MCF 10A (cell line): ENCODE measurements at regions of chr13 and their contacts with region 1.

Region 1: GRCh38 chr13:112873851-112874750 is 94.9 kb upstream of the MCF2L start:
- DNase-seq: peak; percentile 70
- H3K4me3 Mint-ChIP-seq: no peak overlapping the region
- H3K27ac Mint-ChIP-seq: no peak overlapping the region
- H3K4me1 Mint-ChIP-seq: peaks cover 10% of the 10 kb centered on the region
- H3K27me3 Mint-ChIP-seq: no peaks in the 10 kb centered on the region
- CTCF ChIP-seq: peak; percentile 88

Region 2: DNA sequence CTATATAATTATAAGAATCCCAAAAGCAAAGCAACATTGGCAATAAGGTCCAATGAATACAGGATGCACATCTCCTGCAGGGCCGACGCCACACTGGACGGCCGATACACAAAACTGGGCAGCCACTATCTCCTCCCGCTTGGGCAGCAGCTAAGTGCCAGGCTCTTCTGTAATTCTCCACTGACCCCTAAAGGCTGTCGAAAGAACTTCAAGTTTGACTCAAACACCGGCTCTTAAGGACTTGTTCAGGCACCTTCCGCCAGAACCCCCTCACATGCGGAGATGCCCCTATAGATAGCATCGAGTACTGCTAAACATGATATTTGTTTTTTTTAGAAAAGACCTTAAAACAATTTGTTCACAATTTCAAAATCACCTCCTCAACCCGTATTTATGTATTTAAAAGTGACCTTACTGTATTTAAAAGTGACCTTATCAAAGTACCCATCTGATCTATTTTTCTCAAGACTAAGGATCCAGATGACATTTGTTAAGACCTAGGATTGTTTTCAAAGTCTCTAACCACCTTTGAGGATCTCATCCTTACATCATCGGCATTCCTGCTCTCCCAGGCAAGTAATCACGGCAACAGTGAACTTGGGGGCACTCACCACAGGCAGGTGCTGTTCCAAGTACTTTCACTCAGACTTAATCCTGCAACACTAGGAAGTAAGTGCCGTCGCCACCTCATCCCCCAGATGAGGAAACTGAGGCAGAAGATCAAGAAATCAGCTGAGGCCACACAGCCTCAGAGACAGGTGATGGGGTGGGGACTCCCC is 363.9 kb before region 1 on chr13:
- CTCF ChIA-PET with region 1: no interaction called
- POLR2A ChIA-PET with region 1: no interaction called
- intact Hi-C with region 1: loop called (anchors 5 kb)
- DNase-seq: peak; percentile 53
- H3K4me3 Mint-ChIP-seq: no peak overlapping the region
- H3K27ac Mint-ChIP-seq: peak overlapping the region; percentile 25
- H3K4me1 Mint-ChIP-seq: no peaks in the 10 kb centered on the region
- H3K27me3 Mint-ChIP-seq: no peaks in the 10 kb centered on the region
- CTCF ChIP-seq: peak; percentile 52

Region 3: GRCh38 chr13:112616586-112617362 is 257.3 kb before region 1 on chr13:
- CTCF ChIA-PET with region 1: interaction called, 3 read pairs
- POLR2A ChIA-PET with region 1: no interaction called
- intact Hi-C with region 1: loop called (anchors 1 kb)
- DNase-seq: peak; percentile 62
- H3K4me3 Mint-ChIP-seq: no peak overlapping the region
- H3K27ac Mint-ChIP-seq: no peak overlapping the region
- H3K4me1 Mint-ChIP-seq: no peaks in the 10 kb centered on the region
- H3K27me3 Mint-ChIP-seq: peaks cover 33% of the 10 kb centered on the region
- CTCF ChIP-seq: peak; percentile 38

Region 4: DNA sequence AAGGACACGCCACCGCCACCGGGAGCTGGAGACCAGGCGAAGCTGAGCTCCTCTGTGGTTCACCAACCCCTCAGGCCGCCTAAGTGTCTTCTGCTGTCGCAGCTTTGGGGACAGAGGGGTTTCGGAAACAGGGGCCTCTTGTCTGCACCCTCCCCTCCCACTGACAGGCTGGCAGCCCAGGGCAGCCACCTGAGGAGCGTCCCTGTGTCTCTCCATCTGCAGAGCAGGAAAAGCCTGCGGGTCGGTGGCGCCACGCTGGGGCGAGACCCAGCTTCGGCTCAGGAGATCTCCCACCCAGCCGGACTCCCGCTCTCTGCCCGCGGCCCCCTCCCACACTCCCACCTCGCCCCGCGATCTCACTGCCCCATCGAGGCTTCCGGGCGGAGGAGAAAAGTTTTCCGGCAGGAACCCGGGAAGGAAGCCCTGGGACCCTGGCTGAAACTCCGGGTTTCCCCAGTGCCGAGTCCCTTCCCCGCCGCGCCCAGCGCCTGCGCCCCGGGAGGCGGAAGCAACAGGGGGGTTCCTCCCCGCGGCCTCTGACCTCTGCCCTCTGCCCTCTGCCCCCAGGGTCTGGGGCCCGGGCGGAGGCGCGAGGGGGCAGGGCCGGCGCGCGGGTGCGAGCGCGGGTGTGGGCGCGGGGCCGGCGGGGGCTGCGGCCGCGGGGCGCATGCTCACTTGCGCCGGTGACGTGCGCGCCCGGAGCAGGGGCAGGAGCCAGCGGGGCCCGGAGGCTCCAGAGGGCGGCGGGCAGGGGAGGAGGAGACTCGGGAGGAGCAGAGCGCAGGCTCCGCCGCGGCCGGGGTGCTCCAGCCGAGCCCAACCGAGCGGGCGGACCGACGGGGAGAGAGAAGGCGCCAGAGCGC is 184.6 kb before region 1 on chr13 and contains the start of gene ATP11A:
- CTCF ChIA-PET with region 1: no interaction called
- POLR2A ChIA-PET with region 1: no interaction called
- intact Hi-C with region 1: loop called (anchors 2 kb)
- DNase-seq: peak; percentile 85
- H3K4me3 Mint-ChIP-seq: peak within 1 kb of the TSS; percentile 85
- H3K27ac Mint-ChIP-seq: peak within 1 kb of the TSS; percentile 84
- H3K4me1 Mint-ChIP-seq: peaks cover 27% of the 10 kb centered on the region
- H3K27me3 Mint-ChIP-seq: no peaks in the 10 kb centered on the region
- CTCF ChIP-seq: no peak
- total RNA-seq, gene ATP11A: 41.2 and 42.7 TPM in 2 replicates

Region 5: GRCh38 chr13:112711528-112712265 is 162.4 kb before region 1 on chr13:
- CTCF ChIA-PET with region 1: no interaction called
- POLR2A ChIA-PET with region 1: no interaction called
- intact Hi-C with region 1: loop called (anchors 2 kb)
- DNase-seq: peak; percentile 94
- H3K4me3 Mint-ChIP-seq: peak overlapping the region; percentile 70
- H3K27ac Mint-ChIP-seq: peak overlapping the region; percentile 93
- H3K4me1 Mint-ChIP-seq: peaks cover 15% of the 10 kb centered on the region
- H3K27me3 Mint-ChIP-seq: no peaks in the 10 kb centered on the region
- CTCF ChIP-seq: peak; percentile 44